ENCODE measurements at regions of chr14 and their contacts with region 1.

Region 1: GRCh38 chr14:96424109-96424989 is 32.4 kb downstream of the AK7 start:
- DNase-seq: peak; percentile 20 to 62 (median 52)
- ATAC-seq: peak; percentile 85 to 90
- H3K4me3 ChIP-seq: peak overlapping the region; percentile 61
- H3K27ac ChIP-seq: no peak overlapping the region
- H3K4me1 ChIP-seq: no peaks in the 10 kb centered on the region
- H3K27me3 ChIP-seq: no peaks in the 10 kb centered on the region

Region 2: GRCh38 chr14:95832012-95832411 is 592.3 kb before region 1 on chr14:
- intact Hi-C with region 1: no loop called
- DNase-seq: no peak
- ATAC-seq: no peak
- H3K4me3 ChIP-seq: no peak overlapping the region
- H3K27ac ChIP-seq: no peak overlapping the region
- H3K4me1 ChIP-seq: no peaks in the 10 kb centered on the region
- H3K27me3 ChIP-seq: no peaks in the 10 kb centered on the region

Region 3: DNA sequence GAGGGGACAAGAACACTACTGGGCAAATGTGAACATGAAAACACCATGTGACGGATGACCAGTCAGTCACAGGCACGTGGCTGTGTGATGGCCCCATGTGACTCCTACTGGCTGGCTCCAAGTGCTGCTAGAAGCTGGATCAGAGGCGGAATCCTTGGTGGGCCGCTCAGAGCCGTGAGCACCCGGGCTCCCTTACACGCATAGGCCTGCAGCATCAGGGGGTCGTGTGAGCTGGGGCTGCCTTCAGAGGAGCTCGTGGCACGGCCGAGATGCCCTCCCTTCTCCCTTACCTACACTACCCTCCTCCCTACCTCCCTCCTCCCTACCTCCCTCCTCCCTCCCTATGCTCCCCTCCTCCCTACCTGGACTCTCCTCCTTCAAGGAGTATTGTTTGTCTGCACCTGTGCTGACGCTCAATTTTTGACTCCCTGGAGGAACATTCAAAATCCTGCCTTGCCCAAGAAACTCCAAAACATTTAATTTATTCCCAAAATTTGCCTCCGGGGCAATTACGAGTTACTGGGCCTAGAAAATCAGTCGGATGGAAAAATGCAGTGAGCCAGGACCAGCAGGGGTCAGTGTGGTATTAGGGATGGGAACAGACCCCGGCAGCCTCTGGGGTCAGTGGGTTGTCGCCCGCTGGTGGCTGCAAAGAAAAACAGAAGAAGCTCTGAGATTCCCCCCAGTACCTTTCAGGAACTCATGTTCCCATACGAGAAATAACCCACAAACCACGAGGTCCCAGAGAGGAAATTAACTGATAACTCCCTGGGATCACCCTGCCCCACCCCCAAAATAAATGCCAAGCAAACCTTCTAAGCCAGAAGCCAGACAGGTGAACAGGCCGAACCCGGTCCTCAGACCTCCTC is 324.0 kb before region 1 on chr14:
- intact Hi-C with region 1: loop called in 1 of 4 experiments (anchors 10 kb)
- DNase-seq: peak; percentile 70 to 87 (median 79)
- ATAC-seq: peak; percentile 54 to 64
- H3K4me3 ChIP-seq: no peak overlapping the region
- H3K27ac ChIP-seq: no peak overlapping the region
- H3K4me1 ChIP-seq: no peaks in the 10 kb centered on the region
- H3K27me3 ChIP-seq: no peaks in the 10 kb centered on the region

Region 4: DNA sequence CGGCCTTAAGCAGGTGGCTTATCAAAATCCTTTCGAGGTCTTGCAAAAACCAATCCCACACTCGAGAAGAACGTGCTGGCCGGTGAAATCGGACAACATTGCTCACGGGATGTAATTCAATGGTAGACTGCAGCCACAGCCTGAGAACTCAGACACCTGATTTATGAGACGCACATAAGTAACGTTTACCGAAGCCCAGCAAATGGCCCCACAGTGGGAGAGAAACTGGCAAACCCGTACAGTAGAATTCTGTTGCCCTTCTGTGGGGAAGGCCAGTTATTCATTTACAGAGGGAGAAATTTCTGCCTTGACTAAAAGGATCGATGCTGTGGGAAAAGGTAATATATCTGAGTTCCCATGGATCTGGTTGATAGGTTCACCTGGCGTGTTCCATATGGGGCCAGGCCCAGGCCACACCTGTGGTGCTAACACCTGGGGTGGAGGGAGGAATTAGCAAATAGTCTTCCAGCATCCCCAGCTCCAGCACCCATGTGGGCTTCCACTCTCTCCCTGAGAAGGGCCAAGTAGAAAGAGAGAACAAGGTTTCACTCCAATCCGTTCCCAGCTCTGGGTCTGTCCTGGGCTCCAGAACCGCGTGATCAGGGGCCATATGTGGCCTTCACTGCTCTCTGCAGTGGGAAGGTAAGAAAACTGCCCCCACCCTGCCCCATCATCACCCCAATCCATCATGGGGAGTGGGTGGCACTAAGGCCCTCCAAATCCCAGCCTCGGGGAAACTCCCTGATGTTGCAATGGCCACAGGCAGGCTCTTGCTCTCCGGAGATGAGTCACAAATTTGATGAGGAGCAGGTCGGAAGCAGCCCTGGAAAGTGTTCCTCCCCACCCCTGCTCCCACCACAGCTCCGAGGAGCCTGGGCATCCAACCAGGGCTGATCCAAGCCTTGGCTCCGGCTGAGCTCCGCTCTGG is 155.7 kb before region 1 on chr14:
- intact Hi-C with region 1: no loop called
- DNase-seq: peak in 1 of 3 donors; percentile 44
- ATAC-seq: peak in 1 of 2 donors; percentile 58
- H3K4me3 ChIP-seq: no peak overlapping the region
- H3K27ac ChIP-seq: no peak overlapping the region
- H3K4me1 ChIP-seq: no peaks in the 10 kb centered on the region
- H3K27me3 ChIP-seq: no peaks in the 10 kb centered on the region

Region 5: DNA sequence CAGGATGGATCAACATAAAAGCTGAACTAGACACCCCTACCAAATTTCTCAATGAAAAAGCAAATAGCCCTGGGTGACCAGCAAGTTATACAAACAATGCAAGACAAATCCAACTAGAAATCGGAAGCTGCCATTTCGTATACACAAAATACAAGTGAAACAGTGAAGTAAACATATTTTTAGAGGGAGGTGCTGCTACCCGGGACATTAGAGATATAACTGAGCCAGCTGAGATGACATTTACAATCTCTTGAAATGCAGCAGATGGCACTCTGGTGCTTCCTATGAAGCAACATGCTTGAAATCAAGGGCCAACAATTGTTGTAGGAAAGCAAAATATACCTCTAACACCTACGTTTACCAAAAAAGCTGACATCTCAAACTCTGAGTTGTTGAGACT is 142.9 kb before region 1 on chr14:
- intact Hi-C with region 1: loop called in 1 of 4 experiments (anchors 10 kb)
- DNase-seq: no peak
- ATAC-seq: no peak
- H3K4me3 ChIP-seq: no peak overlapping the region
- H3K27ac ChIP-seq: no peak overlapping the region
- H3K4me1 ChIP-seq: no peaks in the 10 kb centered on the region
- H3K27me3 ChIP-seq: no peaks in the 10 kb centered on the region

Region 6: GRCh38 chr14:96297000-96297399 is 127.3 kb before region 1 on chr14:
- intact Hi-C with region 1: loop called in 3 of 4 experiments (anchors 5 to 10 kb)
- DNase-seq: no peak
- ATAC-seq: no peak
- H3K4me3 ChIP-seq: no peak overlapping the region
- H3K27ac ChIP-seq: no peak overlapping the region
- H3K4me1 ChIP-seq: no peaks in the 10 kb centered on the region
- H3K27me3 ChIP-seq: no peaks in the 10 kb centered on the region

Measured in right cardiac atrium (tissue), 5 donors.